ENCODE measurements at regions of chr14 and their contacts with region 1.

Region 1: GRCh38 chr14:50003213-50004031 is 110.5 kb downstream of the ARF6 start:
- DNase-seq: peak; percentile 67 to 82 (median 73)
- H3K4me3 ChIP-seq: peak overlapping the region; percentile 56
- H3K27ac ChIP-seq: peak overlapping the region; percentile 39 to 52
- H3K4me1 ChIP-seq: peaks cover 4% of the 10 kb centered on the region
- H3K27me3 ChIP-seq: no peaks in the 10 kb centered on the region
- CTCF ChIP-seq: peak in 1 of 3 donors; percentile 6
- EP300 ChIP-seq: no peak
- POLR2A ChIP-seq: no peak

Region 2: GRCh38 chr14:49114161-49114893 is 889.1 kb before region 1 on chr14:
- intact Hi-C with region 1: no loop called
- DNase-seq: no peak
- H3K4me3 ChIP-seq: no peak overlapping the region
- H3K27ac ChIP-seq: no peak overlapping the region
- H3K4me1 ChIP-seq: no peaks in the 10 kb centered on the region
- H3K27me3 ChIP-seq: no peaks in the 10 kb centered on the region
- CTCF ChIP-seq: no peak
- EP300 ChIP-seq: no peak
- POLR2A ChIP-seq: no peak

Region 3: DNA sequence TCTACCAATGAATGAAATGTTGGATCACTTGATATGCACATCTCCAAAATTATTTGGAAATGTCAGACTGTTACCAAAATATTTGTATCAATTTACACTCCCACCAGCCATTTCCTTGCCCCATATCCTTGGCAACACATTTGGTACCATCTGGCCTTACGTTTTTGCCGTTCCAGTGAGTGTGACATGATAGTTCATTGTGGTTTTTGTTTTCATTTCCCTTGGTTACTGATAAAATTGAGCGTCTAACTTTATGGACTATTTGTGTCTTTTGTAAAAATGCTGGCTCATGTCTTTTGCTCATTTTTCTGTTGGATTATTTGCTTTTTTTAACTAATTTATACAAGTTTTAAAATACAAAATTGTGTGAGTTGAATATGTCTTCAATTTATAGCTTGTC is 299.5 kb before region 1 on chr14:
- intact Hi-C with region 1: loop called in 1 of 4 experiments (anchors 10 kb)
- DNase-seq: no peak
- H3K4me3 ChIP-seq: no peak overlapping the region
- H3K27ac ChIP-seq: no peak overlapping the region
- H3K4me1 ChIP-seq: peaks cover 1% of the 10 kb centered on the region
- H3K27me3 ChIP-seq: no peaks in the 10 kb centered on the region
- CTCF ChIP-seq: no peak
- EP300 ChIP-seq: no peak
- POLR2A ChIP-seq: no peak

Region 4: DNA sequence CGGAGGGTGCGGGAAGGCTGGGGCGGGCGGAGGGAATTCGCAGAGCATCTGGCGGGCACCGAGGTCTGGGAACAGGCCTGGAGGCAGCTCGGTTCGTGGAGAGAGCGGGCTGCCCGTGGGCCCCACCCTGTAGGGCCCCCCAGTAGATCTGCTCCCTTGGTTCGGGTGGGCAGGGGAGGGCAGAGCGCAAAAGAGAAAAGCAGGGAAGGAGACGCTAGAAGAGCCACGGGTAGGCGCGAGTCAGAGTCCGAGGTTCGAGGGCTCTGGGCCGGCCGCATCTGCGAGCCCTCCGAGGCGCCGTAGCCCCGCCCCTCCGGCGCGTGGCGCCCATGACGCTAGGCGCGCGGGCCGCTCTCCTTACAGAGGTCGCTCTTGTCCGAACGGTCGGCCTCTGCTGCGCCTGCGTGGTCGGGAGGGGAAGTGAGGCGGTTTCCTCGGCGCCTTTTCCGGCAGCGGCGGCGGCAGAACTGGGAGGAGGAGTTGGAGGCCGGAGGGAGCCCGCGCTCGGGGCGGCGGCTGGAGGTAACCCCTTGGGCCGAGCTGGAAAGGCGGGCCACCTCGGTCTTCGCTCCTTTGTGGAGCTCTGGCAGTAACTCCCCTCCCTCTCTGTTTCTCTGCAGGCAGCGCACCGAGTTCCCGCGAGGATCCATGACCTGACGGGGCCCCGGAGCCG is 110.7 kb before region 1 on chr14 and contains the start of gene ARF6:
- intact Hi-C with region 1: loop called in 2 of 4 experiments (anchors 5 to 10 kb)
- DNase-seq: peak; percentile 98 to 99 (median 98)
- H3K4me3 ChIP-seq: peak within 1 kb of the TSS; percentile 100
- H3K27ac ChIP-seq: peak within 1 kb of the TSS; percentile 97 to 99
- H3K4me1 ChIP-seq: peaks cover 3% of the 10 kb centered on the region
- H3K27me3 ChIP-seq: no peaks in the 10 kb centered on the region
- CTCF ChIP-seq: peak in 2 of 3 donors; percentile 9 to 30
- EP300 ChIP-seq: no peak
- POLR2A ChIP-seq: peak; percentile 79
- total RNA-seq, gene ARF6: 19.8 to 39.7 (median 34.9) TPM

Measured in ovary (tissue), 10 donors.